ENCODE measurements at regions of chr7 and their contacts with region 1.

Region 1: DNA sequence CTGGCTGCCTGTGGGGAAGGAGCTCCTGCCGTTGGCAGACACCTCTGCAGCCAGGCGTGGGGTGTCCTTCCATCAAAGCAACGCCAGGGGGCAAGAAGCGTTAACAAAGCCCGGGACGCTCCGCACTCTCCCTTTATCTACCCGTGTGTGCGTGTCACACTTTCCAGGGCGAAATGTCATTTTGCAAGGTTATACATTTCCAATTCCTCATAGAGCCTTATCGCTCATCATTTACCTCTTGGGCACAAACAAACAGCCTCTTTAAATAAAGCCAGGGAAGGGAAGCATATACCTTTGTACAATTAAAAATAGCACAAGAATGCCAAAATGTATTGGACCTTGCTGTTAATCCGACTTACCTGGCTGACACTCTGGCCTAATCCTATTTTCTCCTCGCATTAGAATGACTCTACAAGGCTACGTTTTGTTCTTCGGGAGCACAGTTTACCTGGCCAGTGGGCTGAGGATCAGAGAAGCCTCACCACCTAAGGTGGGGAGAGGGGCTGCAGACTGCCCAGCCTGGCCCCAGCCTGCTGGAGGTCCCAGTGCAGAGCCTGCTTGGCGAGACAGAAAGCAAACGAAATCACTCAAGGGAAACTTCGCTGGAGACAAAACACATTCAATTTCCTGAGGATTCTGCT is 77.6 kb upstream of the EN2 start:
- DNase-seq: peak; percentile 75
- ATAC-seq: peak; percentile 76
- H3K4me3 ChIP-seq: no peak overlapping the region
- H3K27ac ChIP-seq: no peak overlapping the region
- H3K4me1 ChIP-seq: 0 out of 2 replicates have a peak, but pooled peaks cover 4% of the 10 kb centered on the region
- H3K27me3 ChIP-seq: peaks cover 95% of the 10 kb centered on the region
- CTCF ChIP-seq: peak; percentile 74

Region 2: DNA sequence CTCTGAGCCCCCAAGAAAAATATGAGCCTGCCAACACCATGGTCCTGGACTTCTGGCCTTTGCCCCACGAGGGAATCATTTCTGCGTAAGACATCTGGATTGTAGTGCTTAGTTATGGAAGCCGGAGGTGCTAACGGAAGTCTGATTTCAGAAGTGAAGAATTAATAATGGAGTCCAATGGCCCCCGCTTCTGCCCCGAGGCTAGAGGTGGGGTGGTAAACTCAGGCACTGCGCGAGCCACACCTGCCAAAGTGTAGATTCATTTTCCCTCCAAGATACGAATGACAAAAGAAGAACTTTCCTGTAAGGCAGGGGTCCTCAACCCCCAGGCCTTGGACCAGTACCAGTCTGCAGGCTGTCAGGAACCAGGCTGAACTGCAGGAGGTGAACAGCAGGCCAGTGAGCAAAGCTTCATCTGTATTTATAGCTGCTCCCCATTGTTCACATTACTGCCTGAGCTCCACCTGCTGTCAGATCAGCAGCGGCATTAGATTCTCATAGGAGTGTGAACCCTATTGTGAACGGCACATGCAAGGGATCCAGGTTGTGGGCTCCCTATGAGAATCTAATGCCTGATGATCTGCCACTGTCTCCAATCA is 143.8 kb after region 1 on chr7:
- CTCF ChIA-PET with region 1: no interaction called
- POLR2A ChIA-PET with region 1: no interaction called
- intact Hi-C with region 1: loop called (anchors 5 kb)
- DNase-seq: no peak
- ATAC-seq: peak; percentile 38
- H3K4me3 ChIP-seq: no peak overlapping the region
- H3K27ac ChIP-seq: no peak overlapping the region
- H3K4me1 ChIP-seq: no peaks in the 10 kb centered on the region
- H3K27me3 ChIP-seq: peaks cover 78% of the 10 kb centered on the region
- CTCF ChIP-seq: no peak

Region 3: DNA sequence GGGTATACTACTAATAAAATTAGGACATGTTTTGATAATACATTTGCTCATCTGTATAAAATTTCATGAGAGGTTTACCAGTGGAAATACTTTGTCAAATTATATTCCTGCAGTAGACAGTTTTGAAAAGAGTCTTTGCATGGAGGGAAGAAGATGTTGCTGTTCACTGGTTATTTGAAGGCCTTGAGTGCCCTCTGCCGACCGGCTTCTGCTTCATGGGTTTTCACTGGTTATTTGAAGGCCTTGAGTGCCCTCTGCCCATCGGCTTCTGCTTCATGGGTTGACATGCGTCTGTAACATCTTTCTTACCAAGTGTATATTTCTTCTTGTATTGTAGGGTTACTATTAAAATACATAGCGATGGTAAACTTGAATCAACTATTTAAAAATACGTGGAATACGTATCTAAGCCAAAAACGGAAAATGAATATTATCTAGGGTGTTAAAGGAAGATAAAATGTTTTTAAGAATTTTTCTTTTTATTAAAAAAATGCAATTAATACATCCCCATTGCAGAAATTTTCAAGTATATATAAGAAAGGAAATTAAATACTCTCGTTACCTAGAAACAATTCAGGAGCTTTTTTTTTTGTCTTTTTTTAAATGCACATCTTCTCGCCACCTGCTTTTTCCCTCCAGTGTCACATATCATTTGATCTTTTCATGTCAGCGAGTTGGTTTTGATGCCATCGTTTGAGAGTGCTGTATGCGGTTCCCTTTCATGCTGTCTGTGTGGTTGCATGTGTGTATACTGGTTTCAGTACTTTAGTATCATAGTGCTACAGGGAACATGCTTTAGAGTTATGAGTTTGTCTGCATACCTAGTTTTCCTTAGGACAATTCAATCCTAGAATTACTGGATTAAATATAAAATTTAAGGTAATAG is 358.6 kb after region 1 on chr7:
- CTCF ChIA-PET with region 1: no interaction called
- POLR2A ChIA-PET with region 1: no interaction called
- intact Hi-C with region 1: loop called (anchors 10 kb)
- DNase-seq: peak; percentile 74
- ATAC-seq: peak; percentile 98
- H3K4me3 ChIP-seq: no peak overlapping the region
- H3K27ac ChIP-seq: no peak overlapping the region
- H3K4me1 ChIP-seq: no peaks in the 10 kb centered on the region
- H3K27me3 ChIP-seq: no peaks in the 10 kb centered on the region
- CTCF ChIP-seq: peak; percentile 78